ENCODE measurements at regions of chr5 and their contacts with region 1.

Region 1: GRCh38 chr5:54229041-54229780 is 81.2 kb downstream of the ARL15 start:
- DNase-seq: peak; percentile 80
- H3K4me3 Mint-ChIP-seq: no peak overlapping the region
- H3K27ac Mint-ChIP-seq: no peak overlapping the region
- H3K4me1 Mint-ChIP-seq: peaks cover 2% of the 10 kb centered on the region
- H3K27me3 Mint-ChIP-seq: no peaks in the 10 kb centered on the region

Region 2: DNA sequence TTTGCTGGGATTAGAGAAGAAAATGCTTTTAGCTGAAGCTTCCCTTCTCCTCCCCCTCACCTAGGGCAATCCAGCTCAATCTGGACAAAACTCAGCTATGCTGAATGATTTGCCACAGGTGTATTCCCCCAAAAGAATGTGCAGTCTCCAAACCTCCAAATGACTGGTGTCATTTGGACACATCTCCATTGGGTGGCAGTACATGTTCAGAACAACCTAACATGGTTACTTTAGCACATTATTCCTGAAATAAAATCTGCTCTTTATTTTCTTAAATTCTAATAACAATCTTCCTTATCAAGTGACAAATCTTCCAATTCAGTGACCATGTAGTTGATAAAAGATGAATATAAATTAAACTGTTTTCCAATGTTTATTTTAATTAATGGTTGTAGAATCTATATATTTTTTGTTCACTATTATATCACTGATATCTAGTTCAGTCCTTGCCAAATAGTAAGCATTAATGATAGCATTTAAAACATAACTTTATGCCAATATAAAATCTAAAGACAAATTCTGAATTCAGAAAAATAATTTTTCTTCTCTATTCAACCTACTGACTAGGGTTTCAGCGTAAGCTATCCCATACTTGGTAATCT is 1058.4 kb before region 1 on chr5:
- CTCF ChIA-PET with region 1: interaction called, 16 read pairs
- POLR2A ChIA-PET with region 1: no interaction called
- intact Hi-C with region 1: loop called (anchors 2 kb)
- DNase-seq: no peak
- H3K4me3 Mint-ChIP-seq: no peak overlapping the region
- H3K27ac Mint-ChIP-seq: no peak overlapping the region
- H3K4me1 Mint-ChIP-seq: no peaks in the 10 kb centered on the region
- H3K27me3 Mint-ChIP-seq: no peaks in the 10 kb centered on the region

Region 3: GRCh38 chr5:54194318-54194717 is 34.9 kb before region 1 on chr5:
- CTCF ChIA-PET with region 1: interaction called, 10 read pairs
- POLR2A ChIA-PET with region 1: no interaction called
- intact Hi-C with region 1: no loop called
- DNase-seq: no peak
- H3K4me3 Mint-ChIP-seq: no peak overlapping the region
- H3K27ac Mint-ChIP-seq: no peak overlapping the region
- H3K4me1 Mint-ChIP-seq: peaks cover 6% of the 10 kb centered on the region
- H3K27me3 Mint-ChIP-seq: no peaks in the 10 kb centered on the region